Activated T-helper 1 cell treated with anti-CD3 and anti-CD28 coated beads, Interleukin-12 subunit alpha, Interleukin-12 subunit beta, Interleukin-2, Interleukin-4 antibody, amounts not matched to agents 30 ng/mL and 10 ng/mL and 1 ng/mL, durations not matched to agents 14 hours and 24 hours and 36 hours (primary cell): ENCODE measurements at regions of chr4 and their contacts with region 1.

Region 1: DNA sequence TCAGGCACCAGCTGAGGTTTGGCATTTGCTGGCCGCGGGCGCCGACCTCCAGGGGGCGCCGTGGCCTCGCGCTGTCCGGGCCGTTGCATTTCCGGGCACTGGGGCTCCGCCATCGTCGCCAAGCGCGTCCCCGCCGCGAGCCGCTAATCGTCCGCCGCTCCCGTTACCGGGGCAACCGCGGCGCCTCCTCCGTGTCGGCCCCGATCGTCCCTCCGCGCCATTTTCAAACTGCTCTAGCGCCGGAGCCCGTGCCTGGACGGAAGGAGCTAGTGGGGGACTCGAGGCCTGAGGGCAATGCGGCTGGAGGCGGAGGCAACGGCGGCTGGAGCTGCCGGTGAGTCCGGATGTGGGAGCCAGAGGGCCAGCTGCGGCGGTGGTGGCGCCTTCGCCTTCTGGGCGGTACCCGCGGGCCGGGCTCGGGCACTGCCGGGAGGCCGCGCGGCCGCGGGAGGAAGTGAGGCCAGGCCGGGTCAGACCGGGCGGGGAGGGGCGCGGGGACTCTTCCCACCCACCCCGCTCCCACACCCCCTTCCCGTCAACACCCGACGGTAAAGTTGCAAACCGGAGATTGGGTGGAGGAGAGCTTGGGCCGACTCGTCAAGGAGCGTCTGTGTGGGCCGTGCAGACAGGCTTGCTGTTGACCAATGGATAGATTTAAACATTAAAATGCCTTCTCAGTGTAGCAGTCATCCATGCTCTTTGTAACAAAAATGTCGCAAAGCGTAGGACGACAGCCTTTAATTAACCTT is at the start of gene CEP135:
- DNase-seq: peak; percentile 91
- H3K4me3 Mint-ChIP-seq: peak within 1 kb of the TSS; percentile 86
- H3K27ac Mint-ChIP-seq: peak within 1 kb of the TSS; percentile 92
- H3K4me1 Mint-ChIP-seq: peaks cover 44% of the 10 kb centered on the region
- H3K27me3 Mint-ChIP-seq: no peaks in the 10 kb centered on the region
- total RNA-seq, gene CEP135: 19.3 and 19.9 TPM in 2 replicates

Region 2: GRCh38 chr4:55853484-55854046 is 95.3 kb before region 1 on chr4 and contains the start of gene EXOC1:
- intact Hi-C with region 1: loop called (anchors 1 kb)
- DNase-seq: peak; percentile 93
- H3K4me3 Mint-ChIP-seq: peak within 1 kb of the TSS; percentile 37
- H3K27ac Mint-ChIP-seq: peak within 1 kb of the TSS; percentile 53
- H3K4me1 Mint-ChIP-seq: peaks cover 27% of the 10 kb centered on the region
- H3K27me3 Mint-ChIP-seq: peaks cover 2% of the 10 kb centered on the region
- total RNA-seq, gene EXOC1: 18.3 and 18.8 TPM in 2 replicates

Region 3: DNA sequence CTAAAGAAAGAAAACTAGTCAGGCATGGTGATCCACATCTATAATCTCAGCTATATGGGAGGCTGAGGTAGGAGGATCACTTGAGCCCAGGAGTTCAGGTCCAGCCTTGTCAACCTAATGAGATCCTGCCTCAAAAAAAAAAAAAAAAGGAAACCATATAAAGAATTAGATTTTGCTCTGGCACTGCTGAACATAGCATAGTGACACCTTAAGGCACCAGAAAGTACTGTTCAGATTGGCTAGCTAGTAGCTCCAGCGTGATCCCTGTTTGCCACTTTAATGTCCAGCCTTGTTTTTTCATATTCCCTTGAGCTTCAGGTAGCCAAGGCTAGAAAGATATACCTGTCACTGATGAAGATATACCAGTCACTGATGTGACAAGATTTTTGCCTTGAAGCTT is 61.3 kb before region 1 on chr4:
- intact Hi-C with region 1: no loop called
- DNase-seq: no peak
- H3K4me3 Mint-ChIP-seq: no peak overlapping the region
- H3K27ac Mint-ChIP-seq: no peak overlapping the region
- H3K4me1 Mint-ChIP-seq: peaks cover 9% of the 10 kb centered on the region
- H3K27me3 Mint-ChIP-seq: no peaks in the 10 kb centered on the region

Region 4: GRCh38 chr4:55965585-55965984 is 16.7 kb after region 1 on chr4:
- intact Hi-C with region 1: no loop called
- DNase-seq: no peak
- H3K4me3 Mint-ChIP-seq: no peak overlapping the region
- H3K27ac Mint-ChIP-seq: no peak overlapping the region
- H3K4me1 Mint-ChIP-seq: no peaks in the 10 kb centered on the region
- H3K27me3 Mint-ChIP-seq: no peaks in the 10 kb centered on the region

Region 5: GRCh38 chr4:55993994-55994663 is 45.2 kb after region 1 on chr4:
- intact Hi-C with region 1: loop called (anchors 2 kb)
- DNase-seq: no peak
- H3K4me3 Mint-ChIP-seq: peak overlapping the region; percentile 25
- H3K27ac Mint-ChIP-seq: peak overlapping the region; percentile 45
- H3K4me1 Mint-ChIP-seq: peaks cover 32% of the 10 kb centered on the region
- H3K27me3 Mint-ChIP-seq: no peaks in the 10 kb centered on the region

Region 6: GRCh38 chr4:56261027-56261426 is 312.1 kb after region 1 on chr4:
- intact Hi-C with region 1: loop called (anchors 1 kb)
- DNase-seq: peak; percentile 34
- H3K4me3 Mint-ChIP-seq: peak overlapping the region; percentile 39
- H3K27ac Mint-ChIP-seq: peak overlapping the region; percentile 22
- H3K4me1 Mint-ChIP-seq: peaks cover 32% of the 10 kb centered on the region
- H3K27me3 Mint-ChIP-seq: peaks cover 19% of the 10 kb centered on the region

Region 7: GRCh38 chr4:56435306-56435926 is 486.5 kb after region 1 on chr4 and contains the start of gene PPAT:
- intact Hi-C with region 1: loop called (anchors 1 kb)
- DNase-seq: peak; percentile 98
- H3K4me3 Mint-ChIP-seq: peak within 1 kb of the TSS; percentile 94
- H3K27ac Mint-ChIP-seq: peak within 1 kb of the TSS; percentile 99
- H3K4me1 Mint-ChIP-seq: peaks cover 52% of the 10 kb centered on the region
- H3K27me3 Mint-ChIP-seq: peaks cover 3% of the 10 kb centered on the region
- total RNA-seq, gene PPAT: 57.4 and 60.1 TPM in 2 replicates

Region 8: GRCh38 chr4:56513517-56513916 is 564.6 kb after region 1 on chr4:
- intact Hi-C with region 1: no loop called
- DNase-seq: no peak
- H3K4me3 Mint-ChIP-seq: no peak overlapping the region
- H3K27ac Mint-ChIP-seq: no peak overlapping the region
- H3K4me1 Mint-ChIP-seq: no peaks in the 10 kb centered on the region
- H3K27me3 Mint-ChIP-seq: peaks cover 24% of the 10 kb centered on the region

Region 9: GRCh38 chr4:56907489-56908205 is 958.7 kb after region 1 on chr4 and contains the start of gene REST:
- intact Hi-C with region 1: loop called (anchors 2 kb)
- DNase-seq: peak; percentile 81
- H3K4me3 Mint-ChIP-seq: peak within 1 kb of the TSS; percentile 84
- H3K27ac Mint-ChIP-seq: peak within 1 kb of the TSS; percentile 78
- H3K4me1 Mint-ChIP-seq: peaks cover 41% of the 10 kb centered on the region
- H3K27me3 Mint-ChIP-seq: peaks cover 10% of the 10 kb centered on the region
- total RNA-seq, gene REST: 52.4 and 60.0 TPM in 2 replicates